Heart left ventricle (tissue), 16 donors: ENCODE measurements at regions of chr2 and their contacts with region 1.

Region 1: DNA sequence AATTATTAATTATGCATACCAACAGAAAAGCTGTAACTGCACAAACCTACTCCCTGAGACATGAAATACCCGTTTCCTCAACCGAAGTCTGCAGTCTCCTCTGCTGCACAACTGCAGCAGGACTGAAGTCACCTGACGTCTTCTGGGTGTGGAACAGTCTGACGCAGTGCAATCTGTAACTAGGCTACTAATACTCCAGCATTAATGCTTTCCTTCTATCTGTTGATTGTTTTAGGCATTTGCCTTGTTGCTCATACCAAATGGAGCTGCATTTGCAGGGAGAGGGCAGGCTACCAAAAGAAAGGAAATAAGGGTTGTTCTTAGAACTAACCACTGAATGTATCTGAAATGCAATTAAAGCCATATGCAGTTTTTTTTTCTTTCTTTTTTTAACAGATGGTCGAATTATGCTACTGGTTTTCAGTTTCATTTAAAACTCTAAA is 40.1 kb downstream of the RTN4 start:
- DNase-seq: peak in 2 of 5 donors; percentile 32 to 37
- ATAC-seq: peak; percentile 66 to 90 (median 84)
- H3K4me3 ChIP-seq: peak overlapping the region in 10 of 12 donors; percentile 1 to 56 (median 34)
- H3K27ac ChIP-seq: peak overlapping the region in 3 of 12 donors; percentile 18 to 66 (median 20)
- H3K4me1 ChIP-seq: peaks cover 0 to 90% (median 56%) of the 10 kb centered on the region in 12 donors
- H3K27me3 ChIP-seq: no peaks in the 10 kb centered on the region
- CTCF ChIP-seq: no peak
- POLR2A ChIP-seq: no peak

Region 2: DNA sequence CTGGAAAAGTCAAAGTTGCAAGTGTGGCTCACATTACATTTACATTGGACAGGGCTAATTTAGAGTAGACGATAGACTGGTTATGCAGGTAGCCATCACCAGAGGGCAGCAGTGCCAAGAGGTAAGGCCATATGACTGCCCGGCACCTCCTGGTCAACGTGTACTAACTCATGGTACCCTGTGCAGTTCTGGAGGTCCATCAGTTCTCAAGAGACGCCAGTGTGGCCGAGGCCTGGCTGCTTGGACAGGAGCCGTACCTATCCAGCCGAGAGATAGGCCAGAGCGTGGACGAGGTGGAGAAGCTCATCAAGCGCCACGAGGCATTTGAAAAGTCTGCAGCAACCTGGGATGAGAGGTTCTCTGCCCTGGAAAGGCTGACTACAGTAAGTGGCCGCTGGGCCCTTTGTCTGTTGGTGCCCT is 352.5 kb before region 1 on chr2:
- intact Hi-C with region 1: loop called in 1 of 10 experiments (anchors 10 kb)
- DNase-seq: peak in 2 of 5 donors; percentile 67 to 68
- ATAC-seq: peak; percentile 64 to 78 (median 68)
- H3K4me3 ChIP-seq: no peak overlapping the region
- H3K27ac ChIP-seq: peak overlapping the region in 10 of 12 donors; percentile 1 to 78 (median 56)
- H3K4me1 ChIP-seq: peaks cover 0 to 29% (median 23%) of the 10 kb centered on the region in 12 donors
- H3K27me3 ChIP-seq: no peaks in the 10 kb centered on the region
- CTCF ChIP-seq: peak; percentile 37 to 69 (median 56)
- POLR2A ChIP-seq: no peak

Region 3: DNA sequence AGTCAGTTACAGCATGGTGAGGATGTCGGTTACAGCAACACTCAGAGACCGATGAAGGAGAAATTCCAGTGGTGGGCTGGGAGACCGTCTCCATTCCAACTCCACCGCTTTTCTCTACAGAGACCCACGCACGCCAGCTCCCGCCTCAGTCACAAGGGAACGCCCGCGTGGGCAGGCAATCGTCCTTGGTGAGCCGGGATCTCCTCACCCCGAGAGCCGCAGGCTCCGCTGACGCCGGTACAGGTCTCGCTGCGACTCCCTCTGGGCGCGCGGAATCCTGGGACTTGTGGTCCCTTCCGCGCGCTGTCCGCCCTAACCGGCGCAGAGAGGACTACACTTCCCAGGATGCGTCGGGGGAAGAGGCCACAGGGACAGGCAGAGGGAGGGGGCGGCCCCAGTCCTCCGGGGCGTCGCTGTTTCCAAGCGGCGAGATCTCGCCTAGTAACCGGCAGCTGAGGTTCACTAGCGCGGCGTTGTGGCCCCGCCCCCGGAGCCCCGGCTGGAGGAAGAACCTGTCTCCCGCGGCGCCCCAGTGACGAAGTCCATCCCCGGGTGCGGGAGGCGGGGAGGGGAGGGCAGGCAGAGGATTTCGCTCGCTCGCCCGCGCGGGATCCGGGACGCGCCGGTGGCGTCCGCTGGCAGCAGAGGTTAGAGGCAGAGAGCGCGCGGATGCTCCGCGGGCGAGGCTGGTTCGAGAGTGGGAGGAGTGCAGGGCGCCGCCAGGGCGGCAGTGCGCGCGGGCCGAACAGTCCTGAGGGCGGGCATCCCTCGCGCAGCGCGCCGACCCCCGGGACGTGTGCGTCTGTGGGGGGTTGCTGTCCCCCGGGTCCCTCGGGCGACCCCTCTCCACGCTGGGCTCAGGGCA is 286.8 kb before region 1 on chr2 and contains the start of gene EML6:
- intact Hi-C with region 1: loop called in 1 of 10 experiments (anchors 10 kb)
- DNase-seq: peak; percentile 98 to 99 (median 98)
- ATAC-seq: peak; percentile 100
- H3K4me3 ChIP-seq: peak within 1 kb of the TSS; percentile 45 to 89 (median 73)
- H3K27ac ChIP-seq: peak within 1 kb of the TSS in 11 of 12 donors; percentile 32 to 82 (median 76)
- H3K4me1 ChIP-seq: peaks cover 0 to 26% (median 9%) of the 10 kb centered on the region in 12 donors
- H3K27me3 ChIP-seq: peaks cover 0 to 18% (median 0%) of the 10 kb centered on the region in 9 donors
- CTCF ChIP-seq: peak in 7 of 12 donors; percentile 7 to 48 (median 24)
- POLR2A ChIP-seq: peak in 1 of 2 donors; percentile 82
- total RNA-seq, gene EML6: 0.08 to 1.2 (median 0.58) TPM

Region 4: GRCh38 chr2:54899576-54900200 is 110.5 kb before region 1 on chr2:
- intact Hi-C with region 1: loop called in 7 of 10 experiments (anchors 5 to 10 kb)
- DNase-seq: no peak
- ATAC-seq: peak in 3 of 4 donors; percentile 47 to 78 (median 58)
- H3K4me3 ChIP-seq: no peak overlapping the region
- H3K27ac ChIP-seq: no peak overlapping the region
- H3K4me1 ChIP-seq: peaks cover 0 to 12% (median 0%) of the 10 kb centered on the region in 12 donors
- H3K27me3 ChIP-seq: no peaks in the 10 kb centered on the region
- CTCF ChIP-seq: peak; percentile 22 to 72 (median 60)
- POLR2A ChIP-seq: no peak

Region 5: GRCh38 chr2:54904836-54905235 is 105.3 kb before region 1 on chr2:
- intact Hi-C with region 1: loop called in 7 of 10 experiments (anchors 5 to 10 kb)
- DNase-seq: no peak
- ATAC-seq: peak in 2 of 4 donors; percentile 61
- H3K4me3 ChIP-seq: no peak overlapping the region
- H3K27ac ChIP-seq: no peak overlapping the region
- H3K4me1 ChIP-seq: peaks cover 0 to 13% (median 0%) of the 10 kb centered on the region in 12 donors
- H3K27me3 ChIP-seq: no peaks in the 10 kb centered on the region
- CTCF ChIP-seq: no peak
- POLR2A ChIP-seq: no peak